ENCODE measurements at regions of chr14 and their contacts with region 1.

Region 1: GRCh38 chr14:104976198-104977007 is 1.8 kb downstream of the AHNAK2 start:
- DNase-seq: peak; percentile 86
- ATAC-seq: peak; percentile 85
- H3K4me3 Mint-ChIP-seq: peak overlapping the region; percentile 69
- H3K27ac Mint-ChIP-seq: no peak overlapping the region
- H3K4me1 Mint-ChIP-seq: peaks cover 14% of the 10 kb centered on the region
- H3K27me3 Mint-ChIP-seq: peaks cover 21% of the 10 kb centered on the region
- CTCF ChIP-seq: no peak

Region 2: DNA sequence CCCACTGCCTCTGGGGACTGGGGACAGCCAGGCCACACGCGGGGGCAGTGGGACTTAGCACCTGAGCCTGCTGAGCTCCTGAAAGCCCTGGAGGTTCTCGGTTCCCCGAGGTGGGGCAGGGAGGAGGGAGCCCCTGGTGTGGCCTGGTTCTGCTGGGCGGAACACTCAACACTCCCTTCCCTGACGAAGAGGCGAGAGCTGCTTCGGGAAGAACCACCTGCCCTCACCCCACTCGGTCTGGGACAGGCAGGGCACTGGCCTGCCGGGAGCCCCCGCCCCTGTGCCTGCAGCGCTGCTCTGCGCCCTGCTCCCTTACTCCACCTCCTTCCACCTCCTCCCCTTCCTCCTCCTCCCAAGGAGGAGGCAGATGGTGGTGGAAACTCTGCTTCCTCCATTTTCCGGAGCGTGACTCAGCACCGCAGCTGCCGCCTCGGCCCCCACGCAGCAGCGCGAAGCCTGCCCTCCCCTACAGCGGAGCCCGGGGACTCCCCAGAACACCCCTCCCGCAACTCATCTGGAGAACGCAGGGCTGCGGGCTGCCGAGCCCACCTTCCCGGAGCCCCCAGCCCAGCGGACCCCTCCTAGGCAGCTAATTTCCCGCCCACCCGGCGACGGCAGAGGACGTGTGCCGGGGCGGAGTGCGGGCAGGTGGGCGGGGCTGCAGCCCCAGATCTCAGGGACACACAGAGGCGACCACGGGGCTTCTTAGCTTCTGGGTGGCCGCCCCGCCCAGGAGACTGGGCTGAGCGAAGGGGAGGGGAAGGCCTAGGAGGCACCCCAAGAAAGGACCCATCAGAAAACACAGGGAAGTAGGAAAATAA is 298.7 kb before region 1 on chr14:
- CTCF ChIA-PET with region 1: no interaction called
- POLR2A ChIA-PET with region 1: no interaction called
- intact Hi-C with region 1: no loop called
- DNase-seq: peak; percentile 69
- ATAC-seq: peak; percentile 63
- H3K4me3 Mint-ChIP-seq: peak overlapping the region; percentile 81
- H3K27ac Mint-ChIP-seq: peak overlapping the region; percentile 80
- H3K4me1 Mint-ChIP-seq: peaks cover 52% of the 10 kb centered on the region
- H3K27me3 Mint-ChIP-seq: no peaks in the 10 kb centered on the region
- CTCF ChIP-seq: no peak

Region 3: DNA sequence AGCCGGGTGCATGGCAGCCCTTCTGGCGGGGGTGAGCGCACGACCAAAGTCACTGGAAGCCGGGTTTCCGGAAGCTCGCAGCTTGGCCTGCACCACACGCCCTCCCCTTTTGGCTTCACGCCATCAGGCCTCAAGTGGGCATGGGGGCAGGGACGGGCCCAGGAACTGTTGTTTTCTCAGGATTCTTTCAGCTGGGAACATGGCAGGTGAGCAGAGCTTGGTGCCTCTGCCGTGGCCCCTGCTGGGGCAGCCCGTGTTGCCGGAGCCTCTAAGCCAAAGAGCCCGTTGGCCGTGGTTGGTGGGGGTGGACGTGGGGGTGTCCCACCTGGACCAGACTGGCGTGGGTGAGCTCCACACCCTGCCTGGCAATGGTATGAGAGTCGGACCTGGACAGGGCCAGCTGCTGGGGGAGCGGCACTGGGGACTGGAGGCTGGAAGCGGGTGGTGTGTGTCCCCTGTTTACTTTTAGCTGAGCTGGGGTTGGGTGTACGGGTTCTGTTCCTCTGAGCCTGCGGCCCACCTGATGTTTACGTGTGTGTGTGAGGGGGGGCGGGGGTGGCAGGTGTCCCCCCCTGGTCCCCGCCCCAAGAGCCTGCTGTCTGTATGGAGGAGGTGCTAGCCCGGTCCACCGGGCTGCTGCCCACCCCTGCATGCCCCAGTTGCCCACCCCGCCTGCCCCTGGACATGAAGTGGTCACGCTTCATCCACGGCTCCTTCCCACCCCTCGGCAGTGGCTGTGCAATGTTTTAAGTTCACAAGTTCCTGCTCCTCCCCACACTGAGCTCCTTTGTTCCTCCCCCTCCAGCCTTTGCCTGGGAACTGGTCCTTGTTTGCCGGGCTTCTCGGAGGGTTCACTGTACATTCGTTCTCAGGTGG is 80.4 kb before region 1 on chr14:
- CTCF ChIA-PET with region 1: interaction called, 10 read pairs
- POLR2A ChIA-PET with region 1: interaction called, 6 read pairs
- intact Hi-C with region 1: loop called (anchors 1 kb)
- DNase-seq: no peak
- ATAC-seq: no peak
- H3K4me3 Mint-ChIP-seq: no peak overlapping the region
- H3K27ac Mint-ChIP-seq: no peak overlapping the region
- H3K4me1 Mint-ChIP-seq: peaks cover 6% of the 10 kb centered on the region
- H3K27me3 Mint-ChIP-seq: peaks cover 5% of the 10 kb centered on the region
- CTCF ChIP-seq: no peak

Region 4: DNA sequence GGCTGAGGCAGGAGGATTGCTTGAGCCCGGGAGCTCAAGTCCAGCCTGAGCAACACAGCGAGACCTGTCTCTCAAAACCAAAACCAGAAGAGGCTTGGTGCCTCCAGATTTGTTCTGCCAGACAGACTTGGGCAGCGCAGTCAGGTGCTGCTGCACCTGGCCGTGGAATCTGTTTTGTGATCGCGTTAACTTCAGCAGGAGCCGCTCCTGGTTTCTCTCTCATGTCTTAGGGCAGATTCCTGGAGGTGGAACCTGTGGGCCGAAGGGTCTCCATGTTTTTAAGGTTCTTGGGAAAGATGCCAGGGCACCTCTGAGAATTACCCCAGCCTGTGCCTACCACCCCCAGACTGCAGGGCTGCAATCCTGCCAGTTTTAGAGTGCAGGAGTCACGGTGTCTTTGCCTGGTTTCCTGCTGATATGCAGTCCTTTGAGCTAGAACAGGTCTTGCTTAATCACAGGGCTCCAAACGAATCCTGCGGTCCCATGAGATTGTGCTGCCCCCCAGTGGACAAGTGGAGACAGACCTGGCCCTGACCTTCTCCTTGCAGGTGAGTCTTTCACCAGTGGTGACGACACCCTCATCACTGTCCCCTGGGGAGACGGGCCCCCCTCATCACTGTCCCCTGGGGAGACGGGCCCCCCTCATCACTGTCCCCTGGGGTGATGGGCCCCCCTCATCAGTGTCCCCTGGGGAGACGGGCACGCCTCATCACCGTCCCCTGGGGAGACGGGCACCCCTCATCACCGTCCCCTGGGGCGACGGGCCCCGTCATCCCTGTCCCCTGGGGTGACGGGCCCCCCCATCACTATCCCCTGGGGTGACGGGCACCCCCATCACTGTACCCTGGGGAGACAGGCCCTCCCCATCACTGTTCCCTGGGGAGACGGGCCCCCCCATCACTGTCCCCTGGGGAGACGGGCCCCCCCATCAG is 375.8 kb after region 1 on chr14:
- CTCF ChIA-PET with region 1: no interaction called
- POLR2A ChIA-PET with region 1: no interaction called
- intact Hi-C with region 1: loop called (anchors 2 kb)
- DNase-seq: peak; percentile 73
- ATAC-seq: peak; percentile 90
- H3K4me3 Mint-ChIP-seq: no peak overlapping the region
- H3K27ac Mint-ChIP-seq: peak overlapping the region; percentile 53
- H3K4me1 Mint-ChIP-seq: peaks cover 7% of the 10 kb centered on the region
- H3K27me3 Mint-ChIP-seq: no peaks in the 10 kb centered on the region
- CTCF ChIP-seq: no peak